ENCODE measurements at regions of chr19 and their contacts with region 1.

Region 1: GRCh38 chr19:13794757-13795589 is at the start of gene ZSWIM4:
- DNase-seq: peak; percentile 98
- ATAC-seq: peak; percentile 97
- H3K4me3 Mint-ChIP-seq: peak within 1 kb of the TSS; percentile 96
- H3K27ac Mint-ChIP-seq: peak within 1 kb of the TSS; percentile 94
- H3K4me1 Mint-ChIP-seq: peaks cover 29% of the 10 kb centered on the region
- H3K27me3 Mint-ChIP-seq: no peaks in the 10 kb centered on the region
- CTCF ChIP-seq: no peak
- total RNA-seq, gene ZSWIM4: 6.6 to 6.8 TPM

Region 2: GRCh38 chr19:13784731-13785452 is 10.1 kb before region 1 on chr19:
- CTCF ChIA-PET with region 1: interaction called, 10 read pairs
- POLR2A ChIA-PET with region 1: interaction called, 12 read pairs
- intact Hi-C with region 1: no loop called
- DNase-seq: peak; percentile 85
- ATAC-seq: peak; percentile 78
- H3K4me3 Mint-ChIP-seq: peak overlapping the region; percentile 14
- H3K27ac Mint-ChIP-seq: peak overlapping the region; percentile 41
- H3K4me1 Mint-ChIP-seq: peaks cover 32% of the 10 kb centered on the region
- H3K27me3 Mint-ChIP-seq: no peaks in the 10 kb centered on the region
- CTCF ChIP-seq: peak; percentile 77

Region 3: DNA sequence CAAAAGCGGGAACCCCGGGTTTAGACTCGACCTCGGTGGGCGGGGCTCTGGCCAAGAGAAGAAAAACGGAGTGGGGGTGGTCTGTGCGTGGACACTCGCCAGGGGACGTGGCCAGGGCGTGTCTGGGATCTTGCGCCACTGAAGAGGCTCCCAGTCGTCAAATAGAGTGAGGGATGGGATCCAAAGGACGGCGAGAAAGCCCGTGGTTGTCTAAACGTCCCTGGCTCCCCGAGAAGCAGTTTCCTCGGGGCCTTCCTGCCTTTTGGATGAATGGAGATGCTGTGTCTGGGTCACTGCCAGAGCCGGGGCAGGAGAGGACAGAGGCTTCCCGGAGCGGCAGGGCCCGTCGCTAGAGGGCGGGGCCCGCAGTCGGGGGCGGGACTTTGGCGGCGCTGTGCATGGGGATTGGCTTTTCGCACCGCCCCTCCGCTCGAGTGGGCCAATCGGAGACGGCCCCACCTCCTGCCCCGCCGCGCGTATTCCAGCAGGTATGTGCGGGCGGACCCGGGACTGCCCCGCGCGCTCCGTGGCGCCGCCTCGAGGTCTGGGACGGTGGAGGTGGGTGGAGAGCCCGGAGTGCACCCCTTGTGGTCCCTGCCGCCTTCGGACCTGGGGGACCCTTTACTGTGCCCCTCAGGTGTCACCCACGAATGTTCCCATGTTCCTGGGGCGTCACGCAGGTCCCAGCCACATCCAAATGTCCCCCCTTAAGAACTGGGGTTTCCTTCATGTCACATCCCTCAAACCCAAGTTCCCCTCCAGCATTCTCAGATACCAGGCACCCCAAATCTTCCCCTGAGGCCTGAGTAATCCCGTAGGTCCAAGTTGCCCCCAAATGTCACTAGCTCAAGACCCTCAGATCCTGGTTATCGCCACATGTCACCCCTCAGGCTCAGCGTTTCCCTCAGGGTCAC is 38.6 kb after region 1 on chr19:
- CTCF ChIA-PET with region 1: interaction called, 11 read pairs
- POLR2A ChIA-PET with region 1: interaction called, 32 read pairs
- intact Hi-C with region 1: loop called (anchors 5 kb)
- DNase-seq: peak; percentile 96
- ATAC-seq: peak; percentile 85
- H3K4me3 Mint-ChIP-seq: peak overlapping the region; percentile 68
- H3K27ac Mint-ChIP-seq: peak overlapping the region; percentile 87
- H3K4me1 Mint-ChIP-seq: peaks cover 39% of the 10 kb centered on the region
- H3K27me3 Mint-ChIP-seq: no peaks in the 10 kb centered on the region
- CTCF ChIP-seq: peak; percentile 65

Region 4: GRCh38 chr19:13839130-13839937 is 44.4 kb after region 1 on chr19:
- CTCF ChIA-PET with region 1: interaction called, 11 read pairs
- POLR2A ChIA-PET with region 1: interaction called, 32 read pairs
- intact Hi-C with region 1: loop called (anchors 5 kb)
- DNase-seq: peak; percentile 97
- ATAC-seq: peak; percentile 61
- H3K4me3 Mint-ChIP-seq: peak overlapping the region; percentile 97
- H3K27ac Mint-ChIP-seq: peak overlapping the region; percentile 99
- H3K4me1 Mint-ChIP-seq: peaks cover 36% of the 10 kb centered on the region
- H3K27me3 Mint-ChIP-seq: no peaks in the 10 kb centered on the region
- CTCF ChIP-seq: no peak